ENCODE measurements at regions of chr9 and their contacts with region 1.

Region 1: DNA sequence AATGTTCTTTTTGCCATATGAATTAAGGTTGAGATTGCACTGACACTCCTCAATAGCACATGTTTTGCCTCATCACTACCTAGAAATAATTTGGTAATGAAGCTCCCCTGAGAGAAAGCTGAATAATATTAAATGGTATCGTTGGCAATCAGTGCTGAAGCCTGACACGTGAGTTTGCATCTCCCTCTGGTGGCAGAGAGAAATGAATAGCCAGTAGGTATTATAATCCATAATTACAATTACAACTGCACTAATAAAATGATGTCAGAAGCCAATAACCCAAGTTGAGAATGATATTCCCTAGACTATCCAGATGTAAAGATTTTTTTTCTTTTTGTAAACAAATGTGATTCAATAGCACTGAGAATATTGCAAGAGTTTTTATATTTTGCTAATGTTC is 700.3 kb downstream of the PTPRD start:
- DNase-seq: peak; percentile 46
- H3K4me3 ChIP-seq: no peak overlapping the region
- H3K27ac ChIP-seq: no peak overlapping the region
- H3K4me1 ChIP-seq: no peaks in the 10 kb centered on the region
- CTCF ChIP-seq: peak; percentile 83

Region 2: DNA sequence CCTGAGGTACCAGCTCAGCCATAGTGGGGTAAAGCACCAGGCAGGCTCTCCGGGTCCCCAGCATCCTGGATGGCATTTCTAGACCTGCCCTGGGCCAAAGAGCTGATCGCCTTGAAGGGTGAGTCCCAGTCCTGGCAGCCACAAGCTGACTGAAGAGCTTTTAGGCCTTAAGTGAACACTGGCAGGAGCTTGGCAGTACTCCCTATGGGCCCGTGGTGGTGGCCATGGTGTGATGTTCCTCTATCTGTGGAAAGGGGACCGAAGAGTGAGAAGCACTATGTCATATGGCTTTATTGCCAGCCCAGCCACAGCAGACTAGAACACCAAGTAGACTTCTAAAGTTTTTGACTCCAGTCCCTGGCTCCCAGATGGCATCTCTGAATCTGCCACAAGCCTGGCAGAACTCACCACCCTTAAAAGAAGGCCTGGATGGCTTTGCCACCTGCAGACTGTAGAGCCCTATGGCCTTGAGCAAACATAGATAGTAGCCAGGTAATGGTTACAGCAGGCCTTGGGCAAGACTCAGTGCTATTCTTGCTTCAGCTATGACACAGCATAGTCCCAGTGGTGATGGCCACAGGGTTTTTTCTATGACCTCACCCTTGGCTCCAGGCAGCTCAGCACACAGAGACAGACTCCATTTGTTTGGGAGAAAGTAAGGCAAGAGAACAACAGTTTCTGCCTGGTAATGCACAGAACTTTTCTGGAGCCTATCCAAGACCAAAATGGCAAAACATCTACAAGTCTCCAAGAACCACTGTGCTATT is 1311.4 kb before region 1 on chr9:
- CTCF ChIA-PET with region 1: no interaction called
- POLR2A ChIA-PET with region 1: no interaction called
- intact Hi-C with region 1: no loop called
- DNase-seq: no peak
- H3K4me3 ChIP-seq: no peak overlapping the region
- H3K27ac ChIP-seq: no peak overlapping the region
- H3K4me1 ChIP-seq: no peaks in the 10 kb centered on the region
- CTCF ChIP-seq: no peak

Region 3: GRCh38 chr9:9603345-9603744 is 309.1 kb before region 1 on chr9:
- CTCF ChIA-PET with region 1: no interaction called
- POLR2A ChIA-PET with region 1: interaction called, 4 read pairs
- intact Hi-C with region 1: loop called (anchors 1 kb)
- DNase-seq: no peak
- H3K4me3 ChIP-seq: no peak overlapping the region
- H3K27ac ChIP-seq: no peak overlapping the region
- H3K4me1 ChIP-seq: peaks cover 16% of the 10 kb centered on the region
- CTCF ChIP-seq: no peak

Measured in OCI-LY7 (cell line).